ENCODE measurements at regions of chr10 and their contacts with region 1.

Region 1: DNA sequence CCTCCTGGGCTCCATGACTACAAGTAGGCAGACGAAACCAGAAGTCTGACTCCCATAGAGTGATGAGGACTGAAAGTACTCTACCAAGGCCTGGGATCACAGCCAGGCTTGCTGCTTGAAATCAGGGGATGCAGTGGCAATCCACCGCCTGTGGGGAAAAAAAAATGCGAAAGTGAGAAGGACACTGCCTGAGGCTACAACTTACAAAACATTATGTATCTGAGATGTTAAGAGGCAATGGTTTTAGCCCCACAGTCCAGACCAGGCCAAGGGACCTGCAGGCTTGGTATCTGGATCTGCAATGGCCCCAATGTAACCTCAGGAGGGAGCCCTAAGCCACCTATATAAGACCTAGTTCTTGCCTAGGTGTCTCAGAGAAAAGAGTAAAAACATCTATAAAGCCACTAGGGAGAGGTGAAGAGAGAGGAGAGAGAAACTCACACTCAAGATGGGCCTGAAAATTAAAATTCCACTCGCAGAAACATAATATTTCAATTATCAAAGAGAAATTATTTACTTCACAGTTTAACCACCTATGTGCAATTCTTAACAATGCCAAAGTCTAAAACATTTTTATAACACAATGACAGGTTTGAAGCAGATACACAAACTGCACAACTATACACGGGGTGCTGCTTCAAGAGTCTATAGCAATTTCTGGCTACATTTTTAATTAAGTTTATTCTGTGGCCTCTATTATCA is 13.9 kb downstream of the DNAJC1 start:
- DNase-seq: peak; percentile 38
- H3K4me3 ChIP-seq: no peak overlapping the region
- H3K27ac ChIP-seq: no peak overlapping the region
- H3K4me1 ChIP-seq: no peaks in the 10 kb centered on the region
- H3K27me3 ChIP-seq: no peaks in the 10 kb centered on the region
- CTCF ChIP-seq: peak; percentile 21 to 45
- POLR2A ChIP-seq: no peak

Region 2: GRCh38 chr10:21891439-21891838 is 98.2 kb before region 1 on chr10:
- CTCF ChIA-PET with region 1: no interaction called
- POLR2A ChIA-PET with region 1: no interaction called
- dilution Hi-C with region 1: no loop called
- intact Hi-C with region 1: no loop called
- DNase-seq: no peak
- H3K4me3 ChIP-seq: no peak overlapping the region
- H3K27ac ChIP-seq: no peak overlapping the region
- H3K4me1 ChIP-seq: no peaks in the 10 kb centered on the region
- H3K27me3 ChIP-seq: no peaks in the 10 kb centered on the region
- CTCF ChIP-seq: no peak
- POLR2A ChIP-seq: no peak

Region 3: GRCh38 chr10:22010973-22011408 is 21.4 kb after region 1 on chr10:
- CTCF ChIA-PET with region 1: interaction called, 11 read pairs
- POLR2A ChIA-PET with region 1: no interaction called
- dilution Hi-C with region 1: no loop called
- intact Hi-C with region 1: no loop called
- DNase-seq: peak; percentile 33
- H3K4me3 ChIP-seq: no peak overlapping the region
- H3K27ac ChIP-seq: no peak overlapping the region
- H3K4me1 ChIP-seq: no peaks in the 10 kb centered on the region
- H3K27me3 ChIP-seq: peaks cover 2 to 29% of the 10 kb centered on the region in 2 experiments
- CTCF ChIP-seq: no peak
- POLR2A ChIP-seq: no peak

Region 4: DNA sequence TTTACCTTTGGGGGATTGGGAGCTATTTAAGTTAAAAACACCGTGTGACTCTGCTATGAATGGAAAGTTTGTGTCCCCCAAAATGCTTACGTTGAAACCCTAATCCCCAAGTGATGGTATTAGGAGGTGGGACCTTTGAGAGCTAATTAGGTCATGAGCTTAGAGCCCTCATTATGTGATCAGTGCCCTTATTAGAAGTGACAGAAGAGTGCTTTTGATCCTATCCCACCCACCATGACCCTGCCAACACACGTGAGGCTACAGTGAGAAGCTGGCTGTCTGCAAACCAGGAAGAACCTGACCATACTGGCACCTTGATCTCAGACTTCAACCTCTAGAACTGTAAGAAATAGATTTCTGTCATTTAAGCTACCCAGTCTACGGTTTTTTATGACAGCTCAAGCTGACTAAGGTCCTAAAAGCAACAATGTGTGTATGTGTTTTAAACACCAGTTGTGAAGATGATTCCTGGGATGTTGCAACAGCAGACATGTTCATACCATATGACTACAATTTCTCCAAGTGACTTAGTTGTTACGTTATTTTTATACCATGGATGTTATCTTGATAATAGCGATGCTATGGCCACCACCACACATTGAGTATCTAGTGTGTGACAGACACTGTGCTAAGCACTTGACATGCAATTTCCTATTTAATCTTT is 600.4 kb after region 1 on chr10:
- CTCF ChIA-PET with region 1: interaction called, 7 read pairs
- POLR2A ChIA-PET with region 1: no interaction called
- dilution Hi-C with region 1: no loop called
- intact Hi-C with region 1: loop called (anchors 1 kb)
- DNase-seq: no peak
- H3K4me3 ChIP-seq: no peak overlapping the region
- H3K27ac ChIP-seq: no peak overlapping the region
- H3K4me1 ChIP-seq: no peaks in the 10 kb centered on the region
- H3K27me3 ChIP-seq: no peaks in the 10 kb centered on the region
- CTCF ChIP-seq: no peak
- POLR2A ChIP-seq: no peak

Region 5: GRCh38 chr10:23067939-23068775 is 1078.6 kb after region 1 on chr10:
- CTCF ChIA-PET with region 1: interaction called, 3 read pairs
- POLR2A ChIA-PET with region 1: no interaction called
- dilution Hi-C with region 1: no loop called
- intact Hi-C with region 1: loop called (anchors 5 kb)
- DNase-seq: peak; percentile 65
- H3K4me3 ChIP-seq: no peak overlapping the region
- H3K27ac ChIP-seq: no peak overlapping the region
- H3K4me1 ChIP-seq: no peaks in the 10 kb centered on the region
- H3K27me3 ChIP-seq: no peaks in the 10 kb centered on the region
- CTCF ChIP-seq: peak; percentile 70 to 83
- POLR2A ChIP-seq: no peak